CD4-positive, alpha-beta memory T cell (primary cell): ENCODE measurements at regions of chr1 and their contacts with region 1.

Region 1: DNA sequence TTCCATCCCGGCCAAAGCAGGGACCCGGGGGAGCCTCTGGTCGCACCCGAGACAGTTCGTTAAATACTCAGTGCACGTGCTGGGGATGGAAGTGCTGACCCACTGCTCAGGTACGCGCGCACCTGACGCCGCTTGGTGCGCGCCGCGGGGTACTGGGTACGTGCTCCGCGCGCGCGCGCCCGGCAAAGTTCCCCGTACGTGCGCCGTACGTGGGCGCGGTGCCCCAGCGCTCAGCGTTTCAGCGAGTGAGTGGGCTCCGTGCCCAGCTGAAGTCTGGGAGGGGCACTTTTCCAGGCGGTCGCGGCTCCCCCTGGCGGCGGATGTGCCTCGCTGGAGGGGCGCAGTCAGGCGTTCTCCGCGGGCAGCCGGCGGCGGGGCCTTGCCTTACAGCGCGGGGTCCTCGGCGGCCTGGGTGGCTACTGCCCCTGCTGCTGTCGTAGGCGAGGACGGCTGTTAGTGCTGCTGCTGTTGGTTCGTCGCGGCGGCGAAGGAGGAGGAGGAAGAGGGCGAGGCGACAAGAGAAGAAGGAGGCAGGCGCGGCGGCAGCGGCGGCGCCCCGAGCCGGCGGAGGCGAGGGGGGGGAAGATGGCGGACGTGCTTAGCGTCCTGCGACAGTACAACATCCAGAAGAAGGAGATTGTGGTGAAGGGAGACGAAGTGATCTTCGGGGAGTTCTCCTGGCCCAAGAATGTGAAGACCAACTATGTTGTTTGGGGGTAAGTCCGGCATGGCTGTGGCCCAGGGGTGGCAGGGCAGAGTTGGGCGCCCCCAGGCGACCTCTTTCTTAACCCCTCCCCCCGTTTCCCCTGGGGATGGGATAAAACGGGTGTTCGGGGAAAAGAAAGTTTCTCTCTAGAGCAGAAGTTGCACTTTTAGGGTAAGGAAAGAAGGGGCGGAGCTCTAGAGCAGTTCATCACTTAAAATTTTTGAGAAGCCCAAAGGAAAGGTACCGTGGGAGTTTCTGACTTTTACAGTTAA is at the start of gene CDC73:
- DNase-seq: peak; percentile 98 to 100 (median 99)
- H3K4me3 ChIP-seq: peak within 1 kb of the TSS; percentile 68 to 89
- H3K4me3 Mint-ChIP-seq: peak within 1 kb of the TSS; percentile 90 to 98 (median 94)
- H3K27ac ChIP-seq: peak within 1 kb of the TSS; percentile 80
- H3K27ac Mint-ChIP-seq: peak within 1 kb of the TSS; percentile 93 to 98 (median 98)
- H3K4me1 ChIP-seq: peaks cover 45% of the 10 kb centered on the region
- H3K4me1 Mint-ChIP-seq: peaks cover 27 to 72% (median 43%) of the 10 kb centered on the region in 4 donors
- H3K27me3 ChIP-seq: no peaks in the 10 kb centered on the region
- H3K27me3 Mint-ChIP-seq: no peaks in the 10 kb centered on the region
- total RNA-seq, gene CDC73: 70.4 to 75.0 TPM

Region 2: DNA sequence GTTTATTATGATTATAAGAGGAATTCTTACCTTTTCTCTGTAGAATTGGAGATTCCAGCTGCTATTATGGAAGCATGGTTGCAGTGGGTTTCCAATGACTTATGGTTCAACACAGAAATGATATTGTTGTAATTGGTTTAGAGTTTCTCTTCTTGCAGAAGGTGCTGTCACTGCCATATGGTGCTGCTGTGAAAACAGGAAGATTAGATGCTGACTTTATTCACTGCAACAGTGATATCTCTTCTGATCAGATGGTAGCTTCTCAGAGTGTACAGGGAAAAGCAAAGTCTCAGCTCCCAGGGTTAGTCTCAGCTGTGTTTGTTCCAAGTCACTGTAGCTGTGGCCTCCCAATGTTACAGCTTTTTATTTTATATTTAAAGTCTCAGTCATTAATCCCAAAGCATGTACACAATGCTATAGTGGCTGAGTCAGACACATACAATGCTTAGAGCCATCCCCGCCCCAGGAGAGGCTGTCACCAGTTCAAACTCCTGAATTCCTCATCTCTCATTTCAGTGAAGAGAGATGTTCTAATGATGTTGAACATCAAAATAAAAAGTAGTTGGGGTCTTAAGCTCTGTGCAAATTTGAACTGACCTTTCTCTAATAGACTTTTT is 355.8 kb before region 1 on chr1:
- CTCF ChIA-PET with region 1: no interaction called
- POLR2A ChIA-PET with region 1: no interaction called
- intact Hi-C with region 1: no loop called
- DNase-seq: no peak
- H3K4me3 ChIP-seq: no peak overlapping the region
- H3K4me3 Mint-ChIP-seq: no peak overlapping the region
- H3K27ac ChIP-seq: no peak overlapping the region
- H3K27ac Mint-ChIP-seq: no peak overlapping the region
- H3K4me1 ChIP-seq: no peaks in the 10 kb centered on the region
- H3K4me1 Mint-ChIP-seq: no peaks in the 10 kb centered on the region
- H3K27me3 ChIP-seq: no peaks in the 10 kb centered on the region
- H3K27me3 Mint-ChIP-seq: peaks cover 8 to 13% of the 10 kb centered on the region in 2 donors

Region 3: DNA sequence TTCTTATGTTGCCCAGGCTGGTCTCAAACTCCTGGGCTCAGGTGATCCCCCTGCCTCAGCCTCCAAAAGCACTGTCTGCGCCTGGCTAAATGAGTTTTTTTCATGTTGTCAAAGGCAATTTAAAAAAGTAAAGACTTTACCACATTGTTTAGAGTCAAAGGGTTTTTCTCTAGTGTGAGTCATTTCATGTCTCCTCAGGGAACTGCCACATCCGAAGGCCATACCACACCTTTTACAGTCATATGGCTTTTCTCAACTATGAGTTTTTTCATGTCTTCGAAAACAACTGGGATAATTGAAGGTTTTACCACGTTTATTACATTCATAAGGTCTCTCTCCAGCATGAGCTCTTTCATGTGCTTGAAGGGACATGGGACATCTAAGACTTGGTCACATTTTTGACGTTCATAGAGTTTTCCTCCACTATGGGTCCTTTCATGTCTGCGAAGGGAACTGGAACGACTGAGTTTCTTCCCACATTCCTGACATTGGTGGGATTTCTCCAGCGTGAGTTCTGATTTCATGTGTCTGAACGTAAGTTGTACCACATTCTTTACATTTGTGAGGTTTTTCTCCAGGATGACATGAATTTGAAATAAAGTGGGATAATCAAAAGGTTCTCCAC is 128.4 kb before region 1 on chr1:
- CTCF ChIA-PET with region 1: no interaction called
- POLR2A ChIA-PET with region 1: no interaction called
- intact Hi-C with region 1: no loop called
- DNase-seq: no peak
- H3K4me3 ChIP-seq: no peak overlapping the region
- H3K4me3 Mint-ChIP-seq: no peak overlapping the region
- H3K27ac ChIP-seq: no peak overlapping the region
- H3K27ac Mint-ChIP-seq: no peak overlapping the region
- H3K4me1 ChIP-seq: no peaks in the 10 kb centered on the region
- H3K4me1 Mint-ChIP-seq: no peaks in the 10 kb centered on the region
- H3K27me3 ChIP-seq: no peaks in the 10 kb centered on the region
- H3K27me3 Mint-ChIP-seq: no peaks in the 10 kb centered on the region

Region 4: DNA sequence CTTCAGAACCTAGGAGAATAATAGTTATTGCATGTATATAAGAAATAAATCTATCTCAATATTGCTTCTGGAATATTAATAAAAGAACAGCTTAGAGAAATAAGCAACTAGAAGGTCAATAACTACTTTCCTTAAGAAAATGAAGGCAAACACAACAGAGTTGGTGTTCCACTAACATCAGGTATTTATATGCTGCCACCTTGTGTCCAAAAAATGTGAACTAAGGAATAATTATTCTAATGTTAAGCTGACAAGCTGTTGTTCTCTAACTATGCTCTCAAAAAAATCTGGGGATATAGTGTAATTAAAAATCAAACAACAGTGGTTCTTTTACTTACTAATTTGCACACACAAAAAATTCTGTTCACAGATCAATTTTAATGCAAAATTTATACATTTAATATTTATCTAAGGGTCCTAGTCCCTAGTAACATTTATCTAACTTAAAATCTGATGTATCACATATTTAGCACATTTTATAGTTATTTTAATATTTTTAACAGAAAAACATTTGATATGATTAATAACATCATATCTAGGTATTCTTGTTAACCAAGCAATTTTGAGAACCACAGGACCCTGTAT is 102.4 kb before region 1 on chr1:
- CTCF ChIA-PET with region 1: no interaction called
- POLR2A ChIA-PET with region 1: interaction called, 4 read pairs
- intact Hi-C with region 1: loop called (anchors 2 kb)
- DNase-seq: peak in 4 of 5 donors; percentile 39 to 45 (median 42)
- H3K4me3 ChIP-seq: no peak overlapping the region
- H3K4me3 Mint-ChIP-seq: no peak overlapping the region
- H3K27ac ChIP-seq: no peak overlapping the region
- H3K27ac Mint-ChIP-seq: no peak overlapping the region
- H3K4me1 ChIP-seq: no peaks in the 10 kb centered on the region
- H3K4me1 Mint-ChIP-seq: no peaks in the 10 kb centered on the region
- H3K27me3 ChIP-seq: no peaks in the 10 kb centered on the region
- H3K27me3 Mint-ChIP-seq: no peaks in the 10 kb centered on the region

Region 5: DNA sequence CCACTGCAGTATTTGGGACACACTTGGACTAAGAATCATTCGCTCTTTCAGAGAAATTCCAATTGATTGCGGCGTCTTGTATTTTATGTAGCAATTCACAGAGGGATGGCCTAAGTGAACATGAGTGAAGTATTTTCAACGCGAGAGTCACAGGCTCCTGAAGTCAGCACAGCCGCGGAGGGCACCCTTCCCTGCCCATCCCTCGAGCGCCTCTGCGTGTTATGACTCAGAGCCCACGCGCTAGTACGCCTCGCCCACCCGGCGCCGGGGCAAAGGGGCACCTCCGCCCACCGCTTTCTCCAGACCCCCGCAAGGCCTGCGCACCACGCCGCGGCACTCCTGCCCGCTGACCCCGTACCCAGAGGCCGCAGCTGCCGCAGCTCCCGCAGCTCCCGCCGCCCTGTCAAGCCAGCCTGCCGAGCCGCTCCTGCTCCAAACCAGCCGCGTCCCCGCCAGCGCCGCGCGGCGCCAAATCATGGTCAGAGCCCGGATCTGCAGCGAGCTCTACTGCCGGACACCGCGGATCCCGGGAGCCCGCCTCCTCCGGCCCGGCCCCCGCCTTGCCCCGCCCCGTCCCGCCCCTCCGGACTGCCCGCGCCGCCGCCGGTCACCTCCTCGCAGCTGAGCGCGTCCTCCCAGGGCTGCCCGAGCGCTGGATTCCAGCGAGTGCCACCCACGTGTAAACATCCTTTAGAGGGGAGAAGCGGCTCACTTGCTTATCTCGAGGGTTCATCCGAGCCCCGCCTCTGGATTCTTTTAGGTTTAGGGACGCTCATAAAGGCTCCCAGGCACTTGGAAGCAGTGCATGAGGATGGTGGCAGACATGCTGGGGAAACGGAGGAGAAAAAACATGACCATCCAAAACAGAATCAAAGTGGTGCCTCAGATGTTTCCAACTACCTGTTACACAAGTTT is 16.7 kb before region 1 on chr1 and contains the start of gene GLRX2:
- CTCF ChIA-PET with region 1: interaction called, 8 read pairs
- POLR2A ChIA-PET with region 1: interaction called, 44 read pairs
- intact Hi-C with region 1: loop called (anchors 1 kb)
- DNase-seq: peak; percentile 43 to 71 (median 58)
- H3K4me3 ChIP-seq: peak within 1 kb of the TSS; percentile 65 to 94
- H3K4me3 Mint-ChIP-seq: peak within 1 kb of the TSS; percentile 94 to 98 (median 95)
- H3K27ac ChIP-seq: peak within 1 kb of the TSS; percentile 59
- H3K27ac Mint-ChIP-seq: peak within 1 kb of the TSS; percentile 61 to 95 (median 91)
- H3K4me1 ChIP-seq: peaks cover 18% of the 10 kb centered on the region
- H3K4me1 Mint-ChIP-seq: peaks cover 19 to 30% (median 24%) of the 10 kb centered on the region in 4 donors
- H3K27me3 ChIP-seq: no peaks in the 10 kb centered on the region
- H3K27me3 Mint-ChIP-seq: no peaks in the 10 kb centered on the region
- total RNA-seq, gene GLRX2: 15.0 to 17.0 TPM

Region 6: GRCh38 chr1:193143285-193143684 is 21.4 kb after region 1 on chr1:
- CTCF ChIA-PET with region 1: interaction called, 11 read pairs
- POLR2A ChIA-PET with region 1: interaction called, 4 read pairs
- intact Hi-C with region 1: no loop called
- DNase-seq: peak in 2 of 5 donors; percentile 16 to 20
- H3K4me3 ChIP-seq: no peak overlapping the region
- H3K4me3 Mint-ChIP-seq: no peak overlapping the region
- H3K27ac ChIP-seq: no peak overlapping the region
- H3K27ac Mint-ChIP-seq: peak overlapping the region in 1 of 7 donors; percentile 8
- H3K4me1 ChIP-seq: peaks cover 9% of the 10 kb centered on the region
- H3K4me1 Mint-ChIP-seq: peaks cover 15 to 38% (median 30%) of the 10 kb centered on the region in 4 donors
- H3K27me3 ChIP-seq: no peaks in the 10 kb centered on the region
- H3K27me3 Mint-ChIP-seq: no peaks in the 10 kb centered on the region

Region 7: GRCh38 chr1:193543259-193543658 is 421.4 kb after region 1 on chr1:
- CTCF ChIA-PET with region 1: no interaction called
- POLR2A ChIA-PET with region 1: no interaction called
- intact Hi-C with region 1: no loop called
- DNase-seq: no peak
- H3K4me3 ChIP-seq: no peak overlapping the region
- H3K4me3 Mint-ChIP-seq: no peak overlapping the region
- H3K27ac ChIP-seq: no peak overlapping the region
- H3K27ac Mint-ChIP-seq: peak overlapping the region in 6 of 7 donors; percentile 4 to 84 (median 42)
- H3K4me1 ChIP-seq: peaks cover 54% of the 10 kb centered on the region
- H3K4me1 Mint-ChIP-seq: peaks cover 44 to 79% (median 57%) of the 10 kb centered on the region in 4 donors
- H3K27me3 ChIP-seq: no peaks in the 10 kb centered on the region
- H3K27me3 Mint-ChIP-seq: no peaks in the 10 kb centered on the region